ENCODE measurements at regions of chr6 and their contacts with region 1.

Region 1: GRCh38 chr6:47242483-47243386 is 67.0 kb downstream of the TNFRSF21 start:
- DNase-seq: peak; percentile 78
- H3K4me3 Mint-ChIP-seq: no peak overlapping the region
- H3K27ac Mint-ChIP-seq: no peak overlapping the region
- H3K4me1 Mint-ChIP-seq: peaks cover 39% of the 10 kb centered on the region
- H3K27me3 Mint-ChIP-seq: no peaks in the 10 kb centered on the region

Region 2: GRCh38 chr6:46688117-46688965 is 554.4 kb before region 1 on chr6:
- CTCF ChIA-PET with region 1: no interaction called
- intact Hi-C with region 1: no loop called
- DNase-seq: no peak
- H3K4me3 Mint-ChIP-seq: no peak overlapping the region
- H3K27ac Mint-ChIP-seq: no peak overlapping the region
- H3K4me1 Mint-ChIP-seq: no peaks in the 10 kb centered on the region
- H3K27me3 Mint-ChIP-seq: peaks cover 9% of the 10 kb centered on the region

Region 3: DNA sequence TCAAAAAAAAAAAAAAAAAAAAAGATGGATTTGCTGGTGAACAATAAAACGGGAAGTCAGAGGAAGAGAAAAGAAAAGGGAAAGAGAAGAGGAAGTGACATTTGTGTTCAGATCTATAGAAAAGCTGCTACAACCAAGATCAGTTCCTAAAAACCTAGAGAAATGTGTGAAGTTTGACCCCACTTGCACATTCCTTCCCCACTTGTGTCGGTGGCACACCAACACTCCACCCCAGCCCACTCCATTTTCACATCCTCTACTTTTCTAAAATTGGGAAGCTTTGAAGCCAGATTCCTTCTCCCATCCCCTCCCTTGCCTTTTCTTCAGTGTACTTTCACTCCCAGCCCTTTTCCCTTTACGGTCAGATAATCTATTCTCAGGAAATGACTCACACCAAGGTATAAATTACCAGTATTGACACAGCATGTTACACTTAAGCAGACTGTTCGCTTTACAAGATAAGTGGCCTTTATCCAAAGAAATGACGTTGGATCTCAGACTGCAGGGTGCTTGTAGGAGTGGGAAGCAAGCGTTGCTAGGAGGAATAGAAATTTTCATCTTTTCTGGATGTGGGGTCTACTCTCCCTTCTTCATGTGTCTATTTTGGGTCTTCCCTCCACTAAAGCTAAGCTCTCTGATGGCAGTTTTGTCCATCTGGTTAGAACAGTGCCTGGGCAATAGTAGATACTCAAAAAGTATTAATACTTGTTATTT is 108.1 kb before region 1 on chr6:
- CTCF ChIA-PET with region 1: no interaction called
- intact Hi-C with region 1: loop called (anchors 5 kb)
- DNase-seq: no peak
- H3K4me3 Mint-ChIP-seq: no peak overlapping the region
- H3K27ac Mint-ChIP-seq: peak overlapping the region; percentile 28
- H3K4me1 Mint-ChIP-seq: peaks cover 11% of the 10 kb centered on the region
- H3K27me3 Mint-ChIP-seq: peaks cover 14% of the 10 kb centered on the region

Region 4: GRCh38 chr6:47203266-47203937 is 39.3 kb before region 1 on chr6:
- CTCF ChIA-PET with region 1: no interaction called
- intact Hi-C with region 1: loop called (anchors 1 kb)
- DNase-seq: peak; percentile 42
- H3K4me3 Mint-ChIP-seq: no peak overlapping the region
- H3K27ac Mint-ChIP-seq: peak overlapping the region; percentile 66
- H3K4me1 Mint-ChIP-seq: peaks cover 19% of the 10 kb centered on the region
- H3K27me3 Mint-ChIP-seq: peaks cover 4% of the 10 kb centered on the region

Region 5: GRCh38 chr6:47309291-47310130 is 66.8 kb after region 1 on chr6 and contains the start of gene TNFRSF21:
- CTCF ChIA-PET with region 1: no interaction called
- intact Hi-C with region 1: loop called (anchors 2 kb)
- DNase-seq: peak; percentile 91
- H3K4me3 Mint-ChIP-seq: peak within 1 kb of the TSS; percentile 74
- H3K27ac Mint-ChIP-seq: no peak within 1 kb of the TSS
- H3K4me1 Mint-ChIP-seq: peaks cover 7% of the 10 kb centered on the region
- H3K27me3 Mint-ChIP-seq: peaks cover 42% of the 10 kb centered on the region
- total RNA-seq, gene TNFRSF21: 3.6 to 4.3 TPM

Region 6: GRCh38 chr6:47741807-47742206 is 499.1 kb after region 1 on chr6:
- CTCF ChIA-PET with region 1: no interaction called
- intact Hi-C with region 1: loop called (anchors 1 kb)
- DNase-seq: peak; percentile 41
- H3K4me3 Mint-ChIP-seq: no peak overlapping the region
- H3K27ac Mint-ChIP-seq: peak overlapping the region; percentile 59
- H3K4me1 Mint-ChIP-seq: peaks cover 18% of the 10 kb centered on the region
- H3K27me3 Mint-ChIP-seq: peaks cover 8% of the 10 kb centered on the region

Measured in activated naive CD4-positive, alpha-beta T cell treated with anti-CD3 and anti-CD28 coated beads for 36 hours (primary cell).